Activated T-helper 1 cell treated with anti-CD3 and anti-CD28 coated beads, Interleukin-12 subunit alpha, Interleukin-12 subunit beta, Interleukin-2, Interleukin-4 antibody, amounts not matched to agents 30 ng/mL and 10 ng/mL and 1 ng/mL, durations not matched to agents 14 hours and 24 hours and 36 hours (primary cell): ENCODE measurements at regions of chr6 and their contacts with region 1.

Region 1: GRCh38 chr6:133827766-133828165 is 61.1 kb upstream of the TCF21 start:
- DNase-seq: no peak
- H3K4me3 Mint-ChIP-seq: no peak overlapping the region
- H3K27ac Mint-ChIP-seq: no peak overlapping the region
- H3K4me1 Mint-ChIP-seq: no peaks in the 10 kb centered on the region
- H3K27me3 Mint-ChIP-seq: no peaks in the 10 kb centered on the region

Region 2: GRCh38 chr6:131999545-132000146 is 1828.1 kb before region 1 on chr6:
- intact Hi-C with region 1: loop called (anchors 5 kb)
- DNase-seq: no peak
- H3K4me3 Mint-ChIP-seq: no peak overlapping the region
- H3K27ac Mint-ChIP-seq: no peak overlapping the region
- H3K4me1 Mint-ChIP-seq: no peaks in the 10 kb centered on the region
- H3K27me3 Mint-ChIP-seq: no peaks in the 10 kb centered on the region

Region 3: DNA sequence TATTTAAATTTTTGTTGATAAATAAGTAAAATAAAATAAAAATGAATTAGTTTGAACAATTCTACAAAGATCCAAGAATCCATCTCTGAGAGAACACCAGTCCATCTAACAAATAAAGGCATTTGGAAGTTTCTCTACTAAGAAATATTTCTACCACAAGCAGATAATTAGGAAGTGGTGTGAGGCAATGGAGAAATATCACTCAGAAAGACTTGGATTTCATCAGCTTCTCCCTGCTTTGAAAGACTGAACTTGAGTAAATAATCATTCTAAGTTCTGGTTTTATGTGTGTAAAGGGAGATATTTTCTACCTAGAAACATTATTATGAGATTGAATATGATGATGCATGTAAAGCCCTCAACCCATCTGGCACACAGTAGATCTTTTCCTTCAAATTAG is 43.4 kb after region 1 on chr6:
- intact Hi-C with region 1: no loop called
- DNase-seq: no peak
- H3K4me3 Mint-ChIP-seq: no peak overlapping the region
- H3K27ac Mint-ChIP-seq: no peak overlapping the region
- H3K4me1 Mint-ChIP-seq: no peaks in the 10 kb centered on the region
- H3K27me3 Mint-ChIP-seq: peaks cover 4% of the 10 kb centered on the region